Activated naive CD4-positive, alpha-beta T cell treated with anti-CD3 and anti-CD28 coated beads for 36 hours (primary cell): ENCODE measurements at regions of chr12 and their contacts with region 1.

Region 1: GRCh38 chr12:123580772-123581171 is 3.6 kb upstream of the TMED2 start:
- DNase-seq: no peak
- H3K4me3 Mint-ChIP-seq: no peak overlapping the region
- H3K27ac Mint-ChIP-seq: no peak overlapping the region
- H3K4me1 Mint-ChIP-seq: peaks cover 22% of the 10 kb centered on the region
- H3K27me3 Mint-ChIP-seq: no peaks in the 10 kb centered on the region

Region 2: GRCh38 chr12:121939186-121939585 is 1641.6 kb before region 1 on chr12:
- CTCF ChIA-PET with region 1: no interaction called
- intact Hi-C with region 1: no loop called
- DNase-seq: no peak
- H3K4me3 Mint-ChIP-seq: no peak overlapping the region
- H3K27ac Mint-ChIP-seq: no peak overlapping the region
- H3K4me1 Mint-ChIP-seq: peaks cover 5% of the 10 kb centered on the region
- H3K27me3 Mint-ChIP-seq: no peaks in the 10 kb centered on the region

Region 3: GRCh38 chr12:123271001-123271729 is 309.6 kb before region 1 on chr12:
- CTCF ChIA-PET with region 1: interaction called, 3 read pairs
- intact Hi-C with region 1: loop called (anchors 1 kb)
- DNase-seq: peak; percentile 81
- H3K4me3 Mint-ChIP-seq: no peak overlapping the region
- H3K27ac Mint-ChIP-seq: no peak overlapping the region
- H3K4me1 Mint-ChIP-seq: peaks cover 23% of the 10 kb centered on the region
- H3K27me3 Mint-ChIP-seq: no peaks in the 10 kb centered on the region

Region 4: DNA sequence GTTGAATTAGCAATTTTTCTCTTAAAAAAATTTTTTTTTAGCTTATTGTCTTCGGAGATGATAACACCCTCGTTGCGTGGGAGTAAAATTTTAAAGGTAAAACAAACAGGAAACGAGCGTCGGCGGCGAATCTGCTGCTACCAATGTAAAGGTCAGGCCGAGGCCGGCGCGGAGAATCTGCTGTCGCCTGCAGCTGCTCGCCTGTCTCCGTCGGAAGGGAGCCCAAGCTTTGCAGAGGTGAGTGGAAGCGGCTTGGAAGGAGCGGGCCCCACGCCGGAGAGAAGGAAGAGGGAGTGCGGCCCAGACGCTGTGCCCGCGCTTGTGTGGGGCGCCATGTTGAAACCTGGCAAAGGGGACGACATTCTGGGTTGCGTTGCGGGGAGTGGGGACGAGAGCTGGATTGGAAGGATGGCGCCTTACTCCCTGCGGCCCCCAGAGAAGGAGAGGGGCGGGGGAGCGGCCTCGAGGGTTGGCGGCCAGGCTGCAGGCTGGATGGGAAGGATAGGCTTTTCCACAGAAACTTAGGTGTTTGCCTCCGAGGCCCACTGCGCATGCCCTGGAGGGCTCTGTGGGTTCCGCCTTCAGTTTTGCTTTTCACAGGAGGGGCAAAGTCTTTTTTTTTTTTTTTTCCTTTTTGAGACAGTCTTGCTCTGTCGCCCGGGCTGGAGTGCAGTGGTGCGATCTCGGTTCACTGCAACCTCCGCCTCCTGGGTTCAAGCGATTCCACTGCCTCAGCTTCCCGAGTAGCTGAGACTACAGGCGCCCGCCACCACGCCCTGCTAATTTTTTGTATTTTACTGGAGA is 122.6 kb before region 1 on chr12 and contains the start of gene SNRNP35:
- CTCF ChIA-PET with region 1: interaction called, 4 read pairs
- intact Hi-C with region 1: loop called (anchors 1 kb)
- DNase-seq: peak; percentile 83
- H3K4me3 Mint-ChIP-seq: peak within 1 kb of the TSS; percentile 97
- H3K27ac Mint-ChIP-seq: peak within 1 kb of the TSS; percentile 100
- H3K4me1 Mint-ChIP-seq: peaks cover 25% of the 10 kb centered on the region
- H3K27me3 Mint-ChIP-seq: no peaks in the 10 kb centered on the region
- total RNA-seq, gene SNRNP35: 21.5 to 21.8 TPM

Region 5: DNA sequence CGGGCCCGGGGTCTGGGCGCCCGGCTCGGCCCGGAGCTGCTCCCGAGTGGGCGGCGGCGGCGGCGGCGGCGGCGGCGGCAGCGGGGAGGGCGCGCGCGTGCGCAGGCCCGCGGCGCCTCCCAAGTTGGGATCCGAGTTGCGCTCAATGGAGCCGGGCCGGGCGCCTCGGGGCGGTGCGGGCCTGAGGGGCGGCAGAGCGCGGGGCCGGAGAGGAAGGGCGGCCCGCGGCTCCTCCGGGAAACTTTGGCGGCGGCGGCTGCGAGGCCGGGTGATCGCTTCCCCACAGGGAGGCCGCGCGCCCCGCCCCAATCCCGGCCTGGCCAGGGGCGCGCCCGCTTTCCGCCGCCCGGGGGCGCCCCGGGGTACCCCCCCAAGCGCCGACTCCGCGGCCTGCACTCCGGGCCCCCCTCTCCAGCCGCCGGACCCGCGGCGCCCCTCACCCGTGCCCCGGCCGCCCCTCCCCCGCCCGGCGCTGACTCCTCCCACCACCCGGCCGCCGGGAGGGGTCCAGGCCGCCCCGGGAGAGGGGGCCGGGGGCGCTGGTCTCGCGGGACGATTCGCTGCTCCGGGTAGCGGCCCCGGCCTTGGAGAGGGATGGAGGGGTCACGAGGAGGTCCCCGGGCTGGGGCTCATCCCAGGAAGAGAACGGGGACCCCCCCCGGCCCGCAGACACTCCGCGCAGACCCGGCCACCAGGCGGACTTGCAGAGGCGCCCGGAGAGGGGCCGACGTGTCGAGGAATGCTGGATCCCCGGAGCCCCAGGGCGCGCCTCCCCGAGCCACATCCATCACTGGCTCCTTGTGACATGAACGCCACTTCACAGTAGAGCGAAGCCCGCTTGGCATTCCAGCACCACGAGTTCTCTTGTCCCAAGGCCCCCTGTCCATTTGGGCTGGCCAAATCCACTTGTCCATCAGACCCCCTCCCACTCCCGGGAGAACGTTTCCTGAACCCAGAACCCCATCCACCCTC is 46.8 kb before region 1 on chr12 and contains the start of gene RILPL1:
- CTCF ChIA-PET with region 1: interaction called, 9 read pairs
- intact Hi-C with region 1: loop called (anchors 2 kb)
- DNase-seq: peak; percentile 30
- H3K4me3 Mint-ChIP-seq: peak within 1 kb of the TSS; percentile 79
- H3K27ac Mint-ChIP-seq: no peak within 1 kb of the TSS
- H3K4me1 Mint-ChIP-seq: peaks cover 16% of the 10 kb centered on the region
- H3K27me3 Mint-ChIP-seq: no peaks in the 10 kb centered on the region
- total RNA-seq, gene RILPL1: 2.2 to 3.2 TPM

Region 6: DNA sequence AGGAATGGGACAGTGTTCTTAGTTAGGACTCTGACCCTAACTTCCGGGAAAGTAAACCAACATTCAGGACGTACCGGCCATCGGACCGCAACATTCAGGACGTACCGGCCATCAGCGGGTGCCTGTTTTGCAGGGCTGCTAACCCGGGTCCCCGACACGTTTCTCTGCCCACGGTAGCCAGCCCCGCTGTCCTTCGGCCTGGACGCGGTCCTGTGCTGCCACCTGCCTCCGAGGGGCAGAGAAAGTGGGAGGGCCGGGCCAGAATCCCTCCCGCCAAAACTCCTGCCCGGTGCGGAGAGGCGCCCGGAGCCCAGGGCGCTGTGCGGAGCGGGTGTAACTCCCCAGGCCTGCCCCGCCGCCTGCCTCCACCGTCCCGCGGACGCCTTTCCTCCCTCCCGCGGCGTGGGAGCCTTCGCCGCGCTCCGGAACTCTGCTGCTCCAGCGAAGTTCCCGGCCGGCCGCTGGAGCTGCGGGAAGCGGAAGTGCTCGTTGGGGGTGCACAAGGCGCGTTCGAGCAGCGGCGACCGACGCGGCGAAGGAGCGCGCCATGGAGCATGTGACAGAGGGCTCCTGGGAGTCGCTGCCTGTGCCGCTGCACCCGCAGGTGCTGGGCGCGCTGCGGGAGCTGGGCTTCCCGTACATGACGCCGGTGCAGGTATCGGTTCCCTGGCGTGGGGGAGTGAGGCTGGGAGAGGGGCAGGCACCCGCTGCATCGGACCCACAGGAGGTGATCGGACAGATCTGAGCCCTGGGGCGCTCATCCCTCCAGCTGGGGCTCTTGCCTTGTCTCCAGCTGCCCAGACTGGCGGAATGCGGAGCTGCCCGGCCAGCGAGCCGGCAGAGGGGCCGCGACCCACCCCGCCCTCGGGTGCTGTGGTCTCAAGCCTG is 21.1 kb after region 1 on chr12 and contains the start of gene DDX55:
- CTCF ChIA-PET with region 1: interaction called, 4 read pairs
- intact Hi-C with region 1: loop called (anchors 1 kb)
- DNase-seq: peak; percentile 87
- H3K4me3 Mint-ChIP-seq: peak within 1 kb of the TSS; percentile 89
- H3K27ac Mint-ChIP-seq: peak within 1 kb of the TSS; percentile 94
- H3K4me1 Mint-ChIP-seq: peaks cover 45% of the 10 kb centered on the region
- H3K27me3 Mint-ChIP-seq: no peaks in the 10 kb centered on the region
- total RNA-seq, gene DDX55: 44.8 to 48.7 TPM

Region 7: GRCh38 chr12:123633379-123634141 is 52.8 kb after region 1 on chr12 and contains the starts of genes EIF2B1 and GTF2H3:
- CTCF ChIA-PET with region 1: no interaction called
- intact Hi-C with region 1: loop called (anchors 1 kb)
- DNase-seq: peak; percentile 99
- H3K4me3 Mint-ChIP-seq: peak within 1 kb of the TSS; percentile 99
- H3K27ac Mint-ChIP-seq: peak within 1 kb of the TSS; percentile 94
- H3K4me1 Mint-ChIP-seq: peaks cover 33% of the 10 kb centered on the region
- H3K27me3 Mint-ChIP-seq: no peaks in the 10 kb centered on the region
- total RNA-seq, gene EIF2B1: 54.3 to 60.9 TPM
- total RNA-seq, gene GTF2H3: 56.6 to 57.7 TPM

Region 8: GRCh38 chr12:123723765-123724164 is 143.0 kb after region 1 on chr12:
- CTCF ChIA-PET with region 1: no interaction called
- intact Hi-C with region 1: no loop called
- DNase-seq: peak; percentile 26
- H3K4me3 Mint-ChIP-seq: no peak overlapping the region
- H3K27ac Mint-ChIP-seq: no peak overlapping the region
- H3K4me1 Mint-ChIP-seq: peaks cover 26% of the 10 kb centered on the region
- H3K27me3 Mint-ChIP-seq: no peaks in the 10 kb centered on the region